ENCODE measurements at regions of chr12 and their contacts with region 1.

Region 1: DNA sequence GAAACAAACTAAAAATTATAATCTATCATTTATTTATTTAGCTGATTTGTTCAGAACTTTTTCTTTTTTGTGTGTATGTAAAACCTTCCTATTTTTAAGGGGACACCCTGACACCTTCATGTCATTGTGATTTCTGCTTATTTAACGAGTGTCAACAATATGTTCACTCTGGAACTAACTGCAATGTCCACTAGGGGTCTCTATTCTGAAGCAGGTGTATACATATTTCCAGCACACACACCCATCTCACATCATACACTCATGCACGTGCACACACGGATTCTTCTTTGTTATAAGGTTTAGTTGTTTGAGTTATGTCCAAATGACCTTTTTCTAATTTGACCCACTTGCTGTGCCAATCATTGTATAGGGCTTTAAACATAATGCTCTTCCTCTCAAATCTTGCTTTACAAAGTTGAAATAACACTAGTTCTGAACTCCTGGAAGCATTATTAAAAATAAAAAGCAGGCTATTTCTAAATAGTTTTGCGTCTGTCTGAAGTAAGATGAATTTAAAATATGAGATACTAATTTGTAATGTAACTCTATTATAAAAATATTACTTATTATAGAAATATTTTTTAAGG is 15.5 kb downstream of the E2F7 start:
- DNase-seq: no peak
- ATAC-seq: no peak

Region 2: DNA sequence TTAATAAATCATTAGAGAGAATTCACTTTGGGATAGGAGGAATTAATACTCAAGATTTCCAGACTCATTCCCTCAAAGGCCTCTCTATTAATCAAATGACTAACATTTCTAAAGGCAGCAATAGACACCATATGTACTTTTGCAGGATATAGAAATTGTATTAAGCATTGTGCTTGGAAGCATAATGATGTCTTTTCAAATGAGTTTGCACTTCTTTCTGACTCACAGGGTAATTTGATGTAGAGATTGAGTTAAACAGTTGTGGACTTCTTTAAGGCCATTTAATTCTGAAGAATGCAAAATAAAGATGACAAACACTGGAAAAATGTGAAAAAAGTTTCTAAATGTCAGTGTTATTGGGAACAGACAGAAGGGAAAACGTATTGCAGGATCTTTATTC is 107.6 kb before region 1 on chr12:
- intact Hi-C with region 1: no loop called
- DNase-seq: no peak
- ATAC-seq: no peak

Region 3: DNA sequence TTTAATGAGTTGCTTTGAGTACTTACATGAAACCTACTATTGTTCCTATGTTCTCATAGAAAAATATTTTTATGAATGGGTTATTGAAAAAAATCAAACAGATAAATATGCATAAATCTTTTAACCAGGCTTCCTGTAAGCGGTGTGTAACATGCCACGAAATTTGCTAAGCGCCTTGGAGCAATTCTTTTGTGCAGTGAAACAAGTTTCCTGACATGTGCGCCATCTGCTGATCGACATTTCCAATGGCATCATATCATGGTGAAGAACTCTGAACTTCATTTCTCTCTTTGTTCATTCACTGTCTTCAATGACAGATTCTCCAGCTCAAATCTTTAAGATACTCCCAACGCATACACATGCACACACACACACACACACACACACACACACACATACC is 635.3 kb after region 1 on chr12:
- intact Hi-C with region 1: loop called (anchors 10 kb)
- DNase-seq: no peak
- ATAC-seq: peak; percentile 57

Region 4: DNA sequence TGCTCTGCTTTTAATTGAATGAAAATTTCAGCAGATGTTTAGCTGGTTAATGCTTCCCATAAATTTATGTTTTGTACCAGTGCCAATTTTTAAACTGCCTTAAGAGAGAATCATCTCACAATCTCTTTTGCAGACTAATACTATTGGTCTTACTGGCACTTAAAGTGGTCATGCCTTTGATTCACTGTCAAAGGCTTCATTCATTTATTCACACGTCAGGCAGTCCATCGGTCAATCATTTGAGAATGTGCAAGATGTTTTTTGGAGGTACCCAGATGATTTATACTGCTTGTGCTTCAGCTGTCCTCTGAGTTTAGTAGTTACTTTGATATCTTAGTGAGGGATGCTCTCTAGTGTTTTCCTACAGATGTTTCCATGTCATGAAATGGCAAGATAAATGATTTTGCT is 864.2 kb after region 1 on chr12:
- intact Hi-C with region 1: loop called (anchors 10 kb)
- DNase-seq: no peak
- ATAC-seq: no peak